Activated T-helper 1 cell treated with anti-CD3 and anti-CD28 coated beads, Interleukin-12 subunit alpha, Interleukin-12 subunit beta, Interleukin-2, Interleukin-4 antibody, amounts not matched to agents 30 ng/mL and 10 ng/mL and 1 ng/mL, durations not matched to agents 14 hours and 24 hours and 36 hours (primary cell): ENCODE measurements at regions of chr6 and their contacts with region 1.

Region 1: DNA sequence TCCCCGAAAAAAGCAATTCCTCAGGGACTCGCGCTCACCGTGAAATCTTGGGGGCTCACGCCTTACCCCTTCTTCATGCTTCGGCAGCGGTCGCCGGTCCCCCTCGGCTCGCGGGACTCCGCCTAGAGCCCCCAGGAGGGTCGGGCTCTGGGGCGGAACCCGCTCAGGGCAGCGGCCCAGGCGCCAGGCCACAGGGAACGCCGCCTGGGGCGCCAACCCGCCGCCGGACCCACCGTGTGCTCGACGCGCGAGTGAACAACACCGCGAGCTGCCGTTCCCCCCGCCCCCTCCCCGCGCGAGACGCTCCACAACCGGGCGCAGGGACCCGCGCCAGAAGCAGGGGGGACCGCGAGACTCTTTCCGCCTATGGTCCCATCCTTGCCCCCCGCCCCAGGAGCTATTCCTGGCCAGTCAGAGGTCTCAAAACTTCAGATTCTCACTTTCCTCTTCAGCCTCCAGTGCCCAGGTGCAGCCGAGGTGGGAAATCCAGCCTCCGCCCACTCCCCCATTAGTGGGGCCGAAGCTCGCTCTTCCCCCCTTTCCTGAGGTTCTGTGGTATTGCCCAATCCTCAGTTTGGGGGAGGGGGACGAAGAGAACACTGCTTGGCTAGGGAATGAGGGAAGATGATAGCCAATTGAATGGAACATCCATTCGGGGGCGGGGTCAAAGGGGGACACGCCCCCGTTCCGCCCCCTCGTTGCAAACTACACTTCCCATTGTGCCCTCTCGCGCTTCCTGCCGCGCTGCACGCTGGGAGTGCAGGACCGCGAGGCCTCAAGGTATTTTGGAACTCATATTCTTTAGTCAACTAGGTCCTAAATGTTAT is at the start of gene WASF1:
- DNase-seq: peak; percentile 86
- H3K4me3 Mint-ChIP-seq: peak within 1 kb of the TSS; percentile 79
- H3K27ac Mint-ChIP-seq: peak within 1 kb of the TSS; percentile 35
- H3K4me1 Mint-ChIP-seq: peaks cover 10% of the 10 kb centered on the region
- H3K27me3 Mint-ChIP-seq: peaks cover 15% of the 10 kb centered on the region
- total RNA-seq, gene WASF1: 2.0 and 2.3 TPM in 2 replicates

Region 2: DNA sequence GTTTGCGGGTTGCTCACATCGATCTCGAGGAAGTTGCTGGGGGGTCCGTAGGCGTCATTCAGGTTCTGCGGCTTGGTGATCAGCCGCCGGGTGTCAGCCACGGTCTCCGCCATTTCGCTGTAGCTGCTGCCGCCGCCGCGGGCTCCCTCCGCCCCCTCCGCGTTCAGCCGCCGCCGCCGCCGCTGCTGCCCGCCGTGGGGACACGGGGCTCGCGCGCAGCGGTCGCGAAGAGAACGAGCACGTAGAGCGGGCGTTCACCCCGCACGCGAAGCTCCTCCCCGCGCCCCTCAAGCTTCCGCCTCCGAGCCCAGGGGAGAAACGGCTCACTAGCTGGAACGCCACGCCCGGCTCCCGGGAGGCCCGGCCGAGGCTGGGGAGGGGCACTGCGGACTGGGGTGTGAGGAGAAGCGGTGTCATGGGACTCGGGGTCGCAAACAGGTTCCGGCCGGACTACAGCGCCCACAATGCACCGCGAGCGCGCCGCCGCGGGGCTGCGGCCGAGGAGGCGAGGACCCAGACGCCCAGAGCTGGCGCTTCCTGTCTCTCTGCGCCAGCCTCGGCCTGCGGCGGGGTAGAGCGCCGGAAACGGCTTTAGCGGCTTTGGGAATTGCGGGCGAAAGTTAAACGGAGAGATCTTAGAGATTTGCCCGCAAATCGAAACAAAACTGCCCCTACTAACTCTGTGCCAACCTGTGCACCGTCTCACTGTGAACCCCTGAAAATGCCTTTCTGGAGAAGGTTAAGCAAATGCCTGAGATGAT is 1918.6 kb before region 1 on chr6 and contains the start of gene SNX3:
- intact Hi-C with region 1: loop called (anchors 10 kb)
- DNase-seq: peak; percentile 88
- H3K4me3 Mint-ChIP-seq: peak within 1 kb of the TSS; percentile 90
- H3K27ac Mint-ChIP-seq: peak within 1 kb of the TSS; percentile 93
- H3K4me1 Mint-ChIP-seq: peaks cover 12% of the 10 kb centered on the region
- H3K27me3 Mint-ChIP-seq: peaks cover 6% of the 10 kb centered on the region
- total RNA-seq, gene SNX3: 68.5 and 72.5 TPM in 2 replicates

Region 3: DNA sequence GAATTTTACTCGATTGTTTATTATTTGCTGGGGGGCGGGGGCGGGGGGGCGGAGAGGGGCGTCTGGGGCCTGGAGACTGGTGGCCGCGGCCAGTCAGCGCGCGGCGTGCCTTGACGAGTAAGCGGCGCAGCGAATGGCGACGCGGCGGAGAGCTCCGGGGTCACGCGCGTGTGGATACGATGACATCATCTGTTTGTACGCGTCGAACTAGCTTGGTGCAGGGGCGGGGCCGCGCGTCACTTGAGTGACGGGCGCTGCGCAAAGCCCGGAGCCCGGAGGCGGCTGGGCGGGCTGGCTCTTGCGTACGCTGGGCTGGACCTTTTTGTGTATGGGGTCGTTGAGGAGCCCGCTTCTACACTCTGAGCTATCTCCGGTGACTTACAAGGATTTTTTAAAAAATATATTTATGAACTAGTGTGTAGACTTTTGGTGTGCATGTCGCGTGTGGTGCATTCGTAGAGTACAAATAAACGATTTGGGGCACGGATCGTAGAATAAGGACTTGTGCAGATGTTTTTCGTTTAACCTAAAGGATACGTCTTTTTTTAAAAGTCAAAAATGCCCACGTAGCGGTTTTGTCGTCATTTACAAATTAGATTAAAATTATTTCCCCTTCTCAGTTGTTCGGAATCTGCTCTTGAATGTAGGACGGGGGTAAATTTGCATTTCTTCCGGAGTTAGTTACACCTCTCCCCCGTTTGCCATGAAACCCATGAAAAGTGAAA is 1621.1 kb before region 1 on chr6:
- intact Hi-C with region 1: loop called (anchors 2 kb)
- DNase-seq: peak; percentile 95
- H3K4me3 Mint-ChIP-seq: peak overlapping the region; percentile 88
- H3K27ac Mint-ChIP-seq: peak overlapping the region; percentile 91
- H3K4me1 Mint-ChIP-seq: peaks cover 32% of the 10 kb centered on the region
- H3K27me3 Mint-ChIP-seq: peaks cover 47% of the 10 kb centered on the region

Region 4: GRCh38 chr6:109165392-109165974 is 1014.1 kb before region 1 on chr6:
- intact Hi-C with region 1: no loop called
- DNase-seq: no peak
- H3K4me3 Mint-ChIP-seq: no peak overlapping the region
- H3K27ac Mint-ChIP-seq: no peak overlapping the region
- H3K4me1 Mint-ChIP-seq: no peaks in the 10 kb centered on the region
- H3K27me3 Mint-ChIP-seq: no peaks in the 10 kb centered on the region

Region 5: DNA sequence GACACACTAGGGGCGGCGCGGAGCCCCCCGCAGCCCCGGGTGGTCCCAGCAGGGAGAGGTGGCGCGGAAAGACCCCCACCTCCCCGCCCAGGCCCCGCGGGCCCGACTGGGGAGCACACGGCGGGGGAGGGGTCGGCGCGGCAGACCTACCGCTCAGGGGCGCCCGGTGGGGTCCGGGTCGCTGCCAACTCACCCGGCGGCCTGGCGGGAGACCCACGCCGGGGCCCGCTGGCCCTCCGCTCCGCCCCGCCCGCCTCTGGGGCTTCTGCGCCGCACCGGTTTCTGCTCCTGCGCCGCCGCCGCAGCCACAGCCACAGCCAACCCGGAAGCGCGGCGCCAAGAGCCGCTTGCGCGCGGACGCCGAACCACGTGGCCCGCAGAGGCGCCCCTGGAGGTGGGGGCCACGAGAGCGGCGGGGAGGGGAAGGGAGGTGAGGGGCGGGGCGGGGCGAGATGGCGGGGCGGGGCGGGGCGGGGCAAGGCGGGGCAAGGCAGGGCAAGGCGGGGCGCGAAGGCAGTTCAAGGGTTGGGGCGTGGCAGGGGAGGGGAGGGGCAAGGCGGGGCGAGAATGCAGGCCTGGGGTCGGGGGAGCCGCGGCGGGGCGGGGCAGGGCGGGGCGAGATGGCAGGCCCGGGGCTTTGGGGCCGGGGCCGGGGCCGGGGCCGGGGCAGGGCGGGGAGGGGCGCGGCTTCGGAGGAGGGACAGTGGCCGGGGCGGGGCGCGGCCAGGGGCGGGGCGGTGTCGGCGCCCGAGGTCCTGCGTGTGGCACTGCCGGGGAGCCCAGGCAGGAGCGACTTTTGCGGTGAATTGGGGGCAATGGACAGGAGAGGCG is 696.5 kb before region 1 on chr6 and contains the start of gene ZBTB24:
- intact Hi-C with region 1: loop called (anchors 1 kb)
- DNase-seq: peak; percentile 87
- H3K4me3 Mint-ChIP-seq: peak within 1 kb of the TSS; percentile 98
- H3K27ac Mint-ChIP-seq: peak within 1 kb of the TSS; percentile 92
- H3K4me1 Mint-ChIP-seq: peaks cover 47% of the 10 kb centered on the region
- H3K27me3 Mint-ChIP-seq: peaks cover 1% of the 10 kb centered on the region
- total RNA-seq, gene ZBTB24: 19.5 and 20.8 TPM in 2 replicates

Region 6: GRCh38 chr6:109705258-109705657 is 474.4 kb before region 1 on chr6:
- intact Hi-C with region 1: loop called (anchors 5 kb)
- DNase-seq: peak; percentile 53
- H3K4me3 Mint-ChIP-seq: no peak overlapping the region
- H3K27ac Mint-ChIP-seq: no peak overlapping the region
- H3K4me1 Mint-ChIP-seq: peaks cover 5% of the 10 kb centered on the region
- H3K27me3 Mint-ChIP-seq: no peaks in the 10 kb centered on the region

Region 7: DNA sequence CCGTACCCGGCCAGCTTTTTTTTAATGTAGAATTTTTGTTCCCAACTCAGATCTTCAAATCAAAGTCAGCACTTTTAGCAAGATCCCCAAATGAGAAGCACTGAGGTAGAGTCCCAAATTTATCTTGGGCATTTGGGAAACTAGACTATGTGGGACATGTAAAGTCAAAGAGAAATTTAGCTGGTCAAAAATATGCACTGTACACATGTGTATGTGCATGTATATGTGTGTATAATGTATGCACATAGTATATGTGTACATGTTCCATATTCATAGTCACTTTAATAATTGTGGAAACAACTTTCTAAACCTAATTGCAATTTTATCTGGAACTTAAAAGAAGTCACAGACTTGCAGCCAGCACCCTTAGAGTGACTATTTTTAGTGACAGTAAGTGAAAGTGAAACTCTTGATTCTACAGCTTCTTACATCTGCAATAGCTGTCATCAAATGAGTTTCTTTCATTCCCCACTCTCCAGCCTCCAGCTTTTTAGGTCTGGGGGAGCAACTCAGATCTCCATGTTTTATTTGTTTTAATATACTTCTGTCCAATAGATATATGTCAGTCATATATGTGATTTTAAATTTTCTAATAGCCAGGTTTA is 54.3 kb after region 1 on chr6:
- intact Hi-C with region 1: loop called (anchors 2 kb)
- DNase-seq: no peak
- H3K4me3 Mint-ChIP-seq: no peak overlapping the region
- H3K27ac Mint-ChIP-seq: no peak overlapping the region
- H3K4me1 Mint-ChIP-seq: peaks cover 9% of the 10 kb centered on the region
- H3K27me3 Mint-ChIP-seq: no peaks in the 10 kb centered on the region

Region 8: GRCh38 chr6:110815217-110816109 is 635.8 kb after region 1 on chr6 and contains the start of gene CDK19:
- intact Hi-C with region 1: loop called (anchors 1 kb)
- DNase-seq: peak; percentile 97
- H3K4me3 Mint-ChIP-seq: peak within 1 kb of the TSS; percentile 97
- H3K27ac Mint-ChIP-seq: peak within 1 kb of the TSS; percentile 98
- H3K4me1 Mint-ChIP-seq: peaks cover 38% of the 10 kb centered on the region
- H3K27me3 Mint-ChIP-seq: no peaks in the 10 kb centered on the region
- total RNA-seq, gene CDK19: 12.4 and 13.7 TPM in 2 replicates